AG04449 (cell line): ENCODE measurements at regions of chr16 and their contacts with region 1.

Region 1: GRCh38 chr16:20774703-20775362 is 11.0 kb downstream of the ACSM3 start:
- DNase-seq: peak; percentile 2
- H3K4me3 ChIP-seq: no peak overlapping the region
- CTCF ChIP-seq: peak; percentile 87

Region 2: GRCh38 chr16:20763461-20764232 is 11.2 kb before region 1 on chr16 and contains the start of gene ACSM3:
- CTCF ChIA-PET with region 1: interaction called, 22 read pairs
- POLR2A ChIA-PET with region 1: no interaction called
- DNase-seq: no peak
- H3K4me3 ChIP-seq: peak within 1 kb of the TSS; percentile 52
- CTCF ChIP-seq: no peak

Region 3: DNA sequence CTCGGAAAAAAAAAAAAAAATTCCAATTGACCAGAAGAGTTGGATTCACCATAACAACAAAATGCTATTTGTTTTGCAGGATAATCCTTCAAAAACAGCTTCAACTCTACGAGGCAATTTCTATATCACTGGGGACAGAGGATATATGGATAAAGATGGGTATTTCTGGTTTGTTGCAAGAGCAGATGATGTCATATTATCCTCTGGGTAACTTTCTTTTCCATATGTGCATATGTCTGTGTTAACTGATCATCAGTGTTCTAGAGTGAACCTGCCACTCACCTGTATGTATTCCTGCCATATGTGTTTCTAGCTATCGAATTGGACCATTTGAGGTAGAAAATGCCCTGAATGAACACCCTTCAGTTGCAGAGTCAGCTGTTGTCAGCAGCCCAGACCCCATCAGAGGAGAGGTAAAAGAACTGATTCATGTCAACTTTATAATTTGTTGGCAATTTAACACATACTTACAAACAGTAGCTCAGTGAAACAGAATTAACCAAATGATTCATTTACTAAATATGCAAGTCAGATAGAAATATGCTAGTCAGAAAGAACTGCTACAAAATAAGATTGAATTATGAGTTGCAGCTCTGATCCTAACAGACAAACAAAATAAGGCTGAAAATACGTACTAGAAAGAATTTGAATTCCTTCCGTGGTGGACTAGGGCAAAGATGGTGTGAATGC is 17.2 kb after region 1 on chr16:
- CTCF ChIA-PET with region 1: interaction called, 41 read pairs
- POLR2A ChIA-PET with region 1: no interaction called
- DNase-seq: no peak
- H3K4me3 ChIP-seq: no peak overlapping the region
- CTCF ChIP-seq: no peak